ENCODE measurements at regions of chr4 and their contacts with region 1.

Region 1: GRCh38 chr4:64617800-64618199 is 208.6 kb upstream of the TECRL start:
- DNase-seq: no peak
- H3K4me3 ChIP-seq: no peak overlapping the region
- H3K27ac ChIP-seq: no peak overlapping the region
- H3K27me3 ChIP-seq: no peaks in the 10 kb centered on the region
- CTCF ChIP-seq: peak in 52 of 56 donors; percentile 16 to 66 (median 41)

Region 2: GRCh38 chr4:64713256-64713840 is 95.5 kb after region 1 on chr4:
- intact Hi-C with region 1: loop called in 1 of 2 experiments (anchors 10 kb)
- DNase-seq: no peak
- H3K4me3 ChIP-seq: no peak overlapping the region
- H3K27ac ChIP-seq: no peak overlapping the region
- H3K27me3 ChIP-seq: peaks cover 0 to 2% (median 0%) of the 10 kb centered on the region in 45 donors
- CTCF ChIP-seq: peak in 55 of 56 donors; percentile 13 to 69 (median 55)

Region 3: GRCh38 chr4:64781737-64782326 is 164.0 kb after region 1 on chr4:
- intact Hi-C with region 1: no loop called
- DNase-seq: no peak
- H3K4me3 ChIP-seq: no peak overlapping the region
- H3K27ac ChIP-seq: no peak overlapping the region
- H3K27me3 ChIP-seq: no peaks in the 10 kb centered on the region
- CTCF ChIP-seq: peak; percentile 49 to 84 (median 76)